IMR-90 (cell line): ENCODE measurements at regions of chr4 and their contacts with region 1.

Region 1: GRCh38 chr4:177964693-177965168 is 522.5 kb upstream of the AGA start:
- DNase-seq: peak; percentile 51
- ATAC-seq: peak; percentile 14; the same call in 1 of the 2 replicates
- H3K4me3 ChIP-seq: no peak overlapping the region
- H3K27ac ChIP-seq: no peak overlapping the region
- H3K4me1 ChIP-seq: peaks cover 2% of the 10 kb centered on the region
- H3K27me3 ChIP-seq: no peaks in the 10 kb centered on the region
- CTCF ChIP-seq: no peak
- POLR2A ChIP-seq: no peak
- RAD21 ChIP-seq: no peak

Region 2: DNA sequence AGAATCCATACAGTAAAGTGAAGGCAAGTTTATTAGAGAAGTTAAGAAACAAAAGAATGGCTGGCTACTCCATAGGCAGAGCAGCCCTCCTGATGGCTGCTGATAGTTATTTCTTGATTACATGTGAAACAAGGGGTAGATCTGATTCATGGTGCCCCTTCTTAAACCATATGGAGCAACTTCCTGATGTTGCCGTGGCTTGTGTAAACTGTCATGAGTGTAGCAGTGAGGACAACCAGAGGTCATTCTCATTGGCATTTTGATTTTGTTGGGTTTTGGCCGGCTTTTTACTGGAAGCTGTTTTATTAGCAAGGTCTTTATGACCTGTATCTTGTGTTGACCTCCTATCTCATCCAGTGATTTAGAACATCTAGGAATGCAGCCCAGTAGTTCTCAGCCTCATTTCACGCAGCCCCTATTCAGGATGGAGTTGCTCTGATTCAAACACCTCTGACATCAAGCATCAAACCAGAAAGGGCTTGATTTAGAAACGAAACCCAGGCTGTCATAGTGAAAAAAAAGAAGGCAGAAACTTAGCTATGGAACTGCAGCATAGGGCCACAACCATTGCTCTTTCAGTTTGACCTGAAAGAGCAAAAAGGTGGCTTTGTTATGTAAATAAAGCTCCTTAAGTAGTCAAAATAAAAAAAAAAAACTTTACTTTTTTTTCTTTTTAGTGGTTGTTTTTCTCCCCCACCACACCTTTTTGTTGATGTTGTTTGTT is 1607.2 kb before region 1 on chr4:
- CTCF ChIA-PET with region 1: no interaction called
- POLR2A ChIA-PET with region 1: no interaction called
- dilution Hi-C with region 1: no loop called
- in situ Hi-C with region 1: loop called (anchors 25 kb)
- intact Hi-C with region 1: no loop called
- DNase-seq: peak; percentile 39
- ATAC-seq: peak; percentile 38; the same call in 1 of the 2 replicates
- H3K4me3 ChIP-seq: no peak overlapping the region
- H3K27ac ChIP-seq: no peak overlapping the region
- H3K4me1 ChIP-seq: peaks cover 8% of the 10 kb centered on the region
- H3K27me3 ChIP-seq: no peaks in the 10 kb centered on the region
- CTCF ChIP-seq: no peak
- POLR2A ChIP-seq: no peak
- RAD21 ChIP-seq: no peak

Region 3: GRCh38 chr4:178086320-178086719 is 121.6 kb after region 1 on chr4:
- CTCF ChIA-PET with region 1: no interaction called
- POLR2A ChIA-PET with region 1: no interaction called
- dilution Hi-C with region 1: no loop called
- in situ Hi-C with region 1: no loop called
- intact Hi-C with region 1: no loop called
- DNase-seq: peak; percentile 1
- ATAC-seq: no peak
- H3K4me3 ChIP-seq: no peak overlapping the region
- H3K27ac ChIP-seq: no peak overlapping the region
- H3K4me1 ChIP-seq: no peaks in the 10 kb centered on the region
- H3K27me3 ChIP-seq: no peaks in the 10 kb centered on the region
- CTCF ChIP-seq: no peak
- POLR2A ChIP-seq: no peak
- RAD21 ChIP-seq: no peak

Region 4: DNA sequence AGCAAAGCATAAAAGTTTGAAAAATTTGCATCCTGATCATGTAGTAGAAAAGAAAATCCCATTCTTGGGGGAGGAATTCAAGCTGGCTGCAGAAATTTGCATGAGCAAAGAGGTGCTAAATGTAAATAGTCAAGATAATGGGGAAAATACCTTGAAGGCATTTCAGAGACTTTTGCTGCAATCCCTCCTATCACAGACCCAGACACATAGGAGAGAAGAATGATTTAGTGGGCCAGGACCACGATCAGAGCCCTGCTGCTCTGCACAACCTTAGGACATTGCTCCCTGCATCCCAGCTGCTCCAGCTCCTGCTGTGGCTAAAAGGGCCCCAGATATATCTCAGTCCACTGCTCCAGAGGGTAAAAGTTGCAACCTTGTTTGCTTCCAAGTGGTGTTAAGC is 917.2 kb after region 1 on chr4:
- CTCF ChIA-PET with region 1: no interaction called
- POLR2A ChIA-PET with region 1: no interaction called
- dilution Hi-C with region 1: no loop called
- in situ Hi-C with region 1: no loop called
- intact Hi-C with region 1: no loop called
- DNase-seq: no peak
- ATAC-seq: no peak
- H3K4me3 ChIP-seq: no peak overlapping the region
- H3K27ac ChIP-seq: no peak overlapping the region
- H3K4me1 ChIP-seq: no peaks in the 10 kb centered on the region
- H3K27me3 ChIP-seq: no peaks in the 10 kb centered on the region
- CTCF ChIP-seq: no peak
- POLR2A ChIP-seq: no peak
- RAD21 ChIP-seq: no peak